KBM-7 (cell line): ENCODE measurements at regions of chr15 and their contacts with region 1.

Region 1: DNA sequence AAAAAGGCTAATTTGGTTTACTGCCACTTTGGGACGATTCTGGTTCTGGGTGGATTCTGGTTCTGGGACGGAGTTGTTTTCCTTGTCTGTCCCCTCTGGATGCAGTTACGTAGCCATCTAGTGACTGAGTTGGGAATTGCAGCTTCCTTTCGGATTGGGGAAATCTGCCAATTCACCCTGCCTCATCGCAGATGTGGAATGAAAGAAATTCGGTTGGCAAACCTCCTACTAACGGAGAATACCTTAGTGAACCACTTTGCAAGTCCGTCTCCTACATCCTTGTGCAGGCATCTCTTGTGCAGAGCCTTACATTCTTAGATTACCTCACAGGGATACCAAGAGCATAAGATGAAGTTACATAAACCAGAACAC is 31.5 kb upstream of the AP4E1 start:
- DNase-seq: peak; percentile 94

Region 2: GRCh38 chr15:50686468-50687301 is 190.3 kb before region 1 on chr15 and contains the start of gene TRPM7:
- in situ Hi-C with region 1: loop called (anchors 25 kb)
- DNase-seq: peak; percentile 90